Vagina (tissue), 2 donors: ENCODE measurements at regions of chr18 and their contacts with region 1.

Region 1: DNA sequence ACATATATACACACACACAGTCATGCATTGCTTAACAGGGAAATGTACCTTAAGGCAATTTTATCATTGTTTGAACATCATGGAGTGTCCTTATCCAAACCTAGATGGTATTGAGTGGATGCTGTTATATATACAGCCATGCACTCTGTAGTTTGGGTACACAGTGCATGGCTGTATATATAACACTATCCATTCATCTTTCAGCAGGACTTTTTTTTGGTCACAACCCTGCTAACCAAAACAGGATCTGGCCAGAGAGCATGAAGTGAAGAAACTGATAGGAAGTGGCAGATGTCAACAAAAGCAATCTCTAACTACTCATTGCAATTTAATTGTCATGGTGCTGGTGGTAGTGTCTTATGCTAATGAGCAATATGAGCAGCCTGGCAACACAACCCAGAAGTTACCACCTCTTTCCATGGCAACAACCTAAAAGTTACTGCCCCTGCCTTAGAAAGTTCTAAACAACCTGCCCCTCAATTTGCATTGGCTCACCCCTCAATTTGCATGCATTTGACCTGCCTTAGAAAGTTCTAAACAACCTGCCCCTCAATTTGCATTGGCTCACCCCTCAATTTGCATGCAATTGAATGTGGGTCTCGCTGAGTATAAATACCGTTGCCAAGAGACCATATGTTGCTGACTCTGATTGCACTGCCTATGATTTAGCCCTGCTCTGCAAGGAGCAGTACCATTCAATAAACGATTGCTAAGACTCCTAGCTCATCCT is 434.9 kb downstream of the DSEL start:
- DNase-seq: no peak
- H3K4me3 ChIP-seq: no peak overlapping the region
- H3K27ac ChIP-seq: no peak overlapping the region
- H3K4me1 ChIP-seq: no peaks in the 10 kb centered on the region
- H3K27me3 ChIP-seq: no peaks in the 10 kb centered on the region
- CTCF ChIP-seq: no peak
- POLR2A ChIP-seq: no peak

Region 2: GRCh38 chr18:67265464-67266245 is 184.0 kb after region 1 on chr18:
- intact Hi-C with region 1: loop called (anchors 5 kb)
- DNase-seq: no peak
- H3K4me3 ChIP-seq: no peak overlapping the region
- H3K27ac ChIP-seq: no peak overlapping the region
- H3K4me1 ChIP-seq: no peaks in the 10 kb centered on the region
- H3K27me3 ChIP-seq: no peaks in the 10 kb centered on the region
- CTCF ChIP-seq: no peak
- POLR2A ChIP-seq: no peak

Region 3: GRCh38 chr18:68121308-68121707 is 1039.7 kb after region 1 on chr18:
- intact Hi-C with region 1: no loop called
- DNase-seq: no peak
- H3K4me3 ChIP-seq: no peak overlapping the region
- H3K27ac ChIP-seq: no peak overlapping the region
- H3K4me1 ChIP-seq: no peaks in the 10 kb centered on the region
- H3K27me3 ChIP-seq: no peaks in the 10 kb centered on the region
- CTCF ChIP-seq: no peak
- POLR2A ChIP-seq: no peak